Activated CD8-positive, alpha-beta T cell treated with anti-CD3 and anti-CD28 coated beads, Interleukin-2, amount 10 ng/mL, durations not matched to agents 7 days and 5 days (primary cell): ENCODE measurements at regions of chr3 and their contacts with region 1.

Region 1: DNA sequence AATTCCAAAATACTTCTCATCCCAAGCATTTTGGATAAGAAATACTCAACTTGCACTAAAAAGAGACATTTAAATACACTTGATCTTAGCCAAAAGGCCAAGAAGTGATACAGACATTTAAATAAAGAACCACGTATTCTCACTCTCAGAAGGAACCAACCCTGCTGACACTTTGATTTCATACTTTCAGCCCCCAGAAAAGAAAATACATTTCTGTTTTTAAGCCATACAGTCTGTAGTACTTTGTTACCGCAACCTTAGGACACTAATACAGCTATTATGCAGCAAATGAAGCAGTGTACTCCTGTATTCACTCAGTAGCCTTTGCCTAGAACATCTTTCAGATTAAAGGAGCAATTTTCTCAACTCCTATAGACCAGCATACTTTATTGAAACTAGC is 86.7 kb downstream of the TBC1D5 start:
- DNase-seq: no peak
- ATAC-seq: no peak
- H3K4me3 Mint-ChIP-seq: no peak overlapping the region
- H3K27ac Mint-ChIP-seq: no peak overlapping the region
- H3K4me1 Mint-ChIP-seq: no peaks in the 10 kb centered on the region
- H3K27me3 Mint-ChIP-seq: no peaks in the 10 kb centered on the region

Region 2: DNA sequence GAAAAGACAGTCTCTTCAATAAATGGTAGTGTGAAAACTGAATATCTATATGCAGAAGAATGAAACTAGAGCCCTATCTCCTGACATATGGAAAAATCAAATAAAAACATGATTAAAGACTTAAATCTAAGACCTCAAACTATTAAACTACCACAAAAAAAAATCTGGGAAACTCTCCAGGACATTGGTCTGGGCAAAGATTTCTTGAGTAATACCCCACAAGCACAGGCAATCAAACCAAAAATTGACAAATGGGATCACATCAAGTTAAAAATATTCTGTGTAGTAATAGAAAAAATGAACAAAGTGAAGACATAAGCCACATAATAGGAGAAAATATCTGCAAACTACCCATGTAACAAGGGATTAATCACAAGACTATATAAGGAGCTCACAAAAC is 199.7 kb before region 1 on chr3:
- CTCF ChIA-PET with region 1: no interaction called
- POLR2A ChIA-PET with region 1: no interaction called
- DNase-seq: no peak
- ATAC-seq: no peak
- H3K4me3 Mint-ChIP-seq: no peak overlapping the region
- H3K27ac Mint-ChIP-seq: no peak overlapping the region
- H3K4me1 Mint-ChIP-seq: no peaks in the 10 kb centered on the region
- H3K27me3 Mint-ChIP-seq: no peaks in the 10 kb centered on the region

Region 3: DNA sequence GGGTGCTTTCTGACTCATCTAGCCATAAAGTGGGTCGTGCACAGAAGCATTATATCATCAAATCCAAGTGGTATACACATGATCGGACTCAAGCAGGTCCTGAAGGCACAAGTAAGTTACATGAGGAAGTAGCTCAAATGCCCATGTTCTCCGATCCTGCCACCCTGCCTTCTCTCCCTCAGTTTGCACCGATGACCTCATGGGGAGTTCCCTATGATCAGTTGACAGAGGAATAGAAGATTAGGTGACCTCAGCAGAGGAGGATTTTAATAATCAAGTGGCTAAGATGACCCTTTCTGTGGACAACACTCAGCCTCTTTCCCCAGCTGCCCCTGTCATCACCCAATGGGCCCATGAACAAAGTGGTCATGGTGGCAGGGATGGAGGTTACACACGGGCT is 62.8 kb before region 1 on chr3:
- CTCF ChIA-PET with region 1: no interaction called
- POLR2A ChIA-PET with region 1: no interaction called
- DNase-seq: no peak
- ATAC-seq: no peak
- H3K4me3 Mint-ChIP-seq: no peak overlapping the region
- H3K27ac Mint-ChIP-seq: no peak overlapping the region
- H3K4me1 Mint-ChIP-seq: no peaks in the 10 kb centered on the region
- H3K27me3 Mint-ChIP-seq: no peaks in the 10 kb centered on the region

Region 4: DNA sequence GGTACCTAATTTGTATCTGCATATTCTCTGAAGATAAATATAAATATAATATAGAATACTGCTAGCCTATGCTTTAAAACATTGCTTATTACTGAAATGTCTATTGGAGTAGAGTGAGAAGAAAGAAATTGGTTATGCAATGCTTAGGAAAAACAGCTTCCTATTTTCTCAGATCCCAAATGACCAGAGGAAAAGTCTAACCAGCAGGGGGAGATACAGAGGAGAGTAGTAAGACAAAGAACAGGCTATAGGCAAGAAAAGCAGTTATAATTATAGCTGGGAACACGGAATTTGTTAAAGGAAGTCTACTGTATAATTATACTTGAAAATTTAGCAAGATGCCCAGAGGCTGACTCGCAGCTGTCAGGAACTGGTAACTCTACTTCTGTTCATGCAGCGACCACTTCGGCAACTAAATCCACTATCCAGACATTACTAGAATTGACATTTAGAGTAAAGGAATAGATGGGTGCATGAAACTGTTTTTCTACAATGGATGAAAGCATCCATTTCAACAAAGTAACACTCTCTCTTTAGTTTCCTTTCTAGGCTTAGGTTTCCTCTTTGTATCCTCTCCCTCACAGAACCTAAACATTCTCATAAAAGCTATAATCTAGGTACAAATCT is 10.6 kb before region 1 on chr3:
- CTCF ChIA-PET with region 1: interaction called, 12 read pairs
- POLR2A ChIA-PET with region 1: no interaction called
- DNase-seq: no peak
- ATAC-seq: no peak
- H3K4me3 Mint-ChIP-seq: no peak overlapping the region
- H3K27ac Mint-ChIP-seq: no peak overlapping the region
- H3K4me1 Mint-ChIP-seq: no peaks in the 10 kb centered on the region
- H3K27me3 Mint-ChIP-seq: no peaks in the 10 kb centered on the region

Region 5: DNA sequence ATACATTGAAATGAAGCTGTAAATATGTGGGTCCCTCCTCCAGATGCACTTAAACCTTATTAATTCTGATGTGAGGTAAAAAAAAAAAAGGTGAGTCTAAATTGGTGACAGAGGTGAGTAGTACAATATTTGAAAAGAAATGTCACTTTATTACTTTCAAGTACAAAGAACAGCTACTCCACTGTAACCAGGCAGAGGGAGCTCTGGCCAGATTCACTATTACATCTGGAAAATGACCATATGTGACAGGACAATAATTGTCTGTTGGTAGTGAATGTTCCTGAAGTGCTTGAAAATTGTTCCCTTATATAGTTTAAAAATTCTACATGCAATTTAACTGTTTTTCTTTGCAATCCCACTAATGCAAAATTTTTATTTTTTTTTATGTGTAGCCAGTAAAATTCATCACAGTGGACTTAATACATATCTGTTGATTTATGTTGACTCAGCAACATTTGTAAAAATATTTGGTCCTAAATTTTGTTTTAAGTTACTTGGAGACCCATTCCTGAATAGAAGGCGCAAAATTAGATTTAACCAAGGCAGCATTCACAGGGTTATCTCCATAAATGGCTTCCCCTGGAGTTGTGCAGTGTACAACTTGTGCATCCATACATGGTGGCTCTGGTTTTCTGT is 318.6 kb after region 1 on chr3:
- CTCF ChIA-PET with region 1: no interaction called
- POLR2A ChIA-PET with region 1: no interaction called
- DNase-seq: no peak
- ATAC-seq: no peak
- H3K4me3 Mint-ChIP-seq: no peak overlapping the region
- H3K27ac Mint-ChIP-seq: no peak overlapping the region
- H3K4me1 Mint-ChIP-seq: no peaks in the 10 kb centered on the region
- H3K27me3 Mint-ChIP-seq: peaks cover 5% of the 10 kb centered on the region